PC-9 (cell line): ENCODE measurements at regions of chr20 and their contacts with region 1.

Region 1: DNA sequence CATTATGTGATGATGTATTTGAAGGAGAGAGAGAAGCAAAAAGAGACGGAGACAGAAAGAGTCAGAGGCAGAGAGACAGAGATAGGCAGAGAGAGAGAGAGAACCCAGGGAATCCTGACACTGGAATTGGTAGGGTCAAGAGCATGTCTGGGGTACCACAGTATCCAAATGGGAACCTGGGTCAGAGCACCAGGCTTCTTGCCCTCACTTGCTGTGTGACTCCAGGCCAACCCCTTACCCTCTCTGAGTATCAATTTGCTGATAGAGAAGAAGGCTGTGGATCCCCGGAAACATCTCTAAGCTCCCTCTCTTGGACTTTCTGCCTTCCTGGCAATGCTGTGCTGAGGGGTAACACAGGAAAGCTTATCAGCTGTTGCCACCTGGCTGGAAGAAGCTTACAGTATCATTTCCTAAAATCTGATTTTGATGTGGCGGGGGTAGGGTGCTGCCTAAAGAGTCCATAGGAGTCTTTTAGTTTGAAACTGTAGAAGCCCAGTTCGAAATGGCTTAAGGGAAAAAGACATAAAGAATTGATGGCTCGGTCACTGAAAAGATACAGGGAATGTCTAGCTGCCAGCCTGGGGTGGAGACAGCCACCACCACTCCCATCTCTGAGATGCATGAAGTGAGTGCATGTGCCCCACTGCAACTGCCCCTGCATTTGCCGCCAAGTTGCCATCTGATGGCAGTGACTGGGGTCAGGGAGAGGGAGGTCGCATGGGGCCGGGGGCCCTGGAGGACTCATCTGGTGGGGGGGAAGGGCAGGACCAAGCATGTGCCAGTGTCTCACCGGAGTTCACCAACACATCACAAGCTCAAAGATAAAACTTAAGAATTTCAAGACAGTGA is 385.6 kb upstream of the SULF2 start:
- DNase-seq: no peak
- H3K4me3 ChIP-seq: no peak overlapping the region
- H3K27ac ChIP-seq: no peak overlapping the region
- H3K4me1 ChIP-seq: peaks cover 14% of the 10 kb centered on the region
- H3K27me3 ChIP-seq: no peaks in the 10 kb centered on the region
- CTCF ChIP-seq: no peak

Region 2: GRCh38 chr20:48307277-48307676 is 136.4 kb after region 1 on chr20:
- CTCF ChIA-PET with region 1: interaction called, 10 read pairs
- POLR2A ChIA-PET with region 1: no interaction called
- intact Hi-C with region 1: no loop called
- DNase-seq: no peak
- H3K4me3 ChIP-seq: no peak overlapping the region
- H3K27ac ChIP-seq: no peak overlapping the region
- H3K4me1 ChIP-seq: no peaks in the 10 kb centered on the region
- H3K27me3 ChIP-seq: no peaks in the 10 kb centered on the region
- CTCF ChIP-seq: no peak